GM10248 (cell line): ENCODE measurements at regions of chr17 and their contacts with region 1.

Region 1: GRCh38 chr17:39244600-39245570 is 19.1 kb upstream of the STAC2 start:
- DNase-seq: peak; percentile 84
- CTCF ChIP-seq: peak; percentile 95

Region 2: GRCh38 chr17:39069114-39069756 is 175.7 kb before region 1 on chr17:
- CTCF ChIA-PET with region 1: no interaction called
- POLR2A ChIA-PET with region 1: no interaction called
- DNase-seq: peak; percentile 78
- CTCF ChIP-seq: peak; percentile 72

Region 3: DNA sequence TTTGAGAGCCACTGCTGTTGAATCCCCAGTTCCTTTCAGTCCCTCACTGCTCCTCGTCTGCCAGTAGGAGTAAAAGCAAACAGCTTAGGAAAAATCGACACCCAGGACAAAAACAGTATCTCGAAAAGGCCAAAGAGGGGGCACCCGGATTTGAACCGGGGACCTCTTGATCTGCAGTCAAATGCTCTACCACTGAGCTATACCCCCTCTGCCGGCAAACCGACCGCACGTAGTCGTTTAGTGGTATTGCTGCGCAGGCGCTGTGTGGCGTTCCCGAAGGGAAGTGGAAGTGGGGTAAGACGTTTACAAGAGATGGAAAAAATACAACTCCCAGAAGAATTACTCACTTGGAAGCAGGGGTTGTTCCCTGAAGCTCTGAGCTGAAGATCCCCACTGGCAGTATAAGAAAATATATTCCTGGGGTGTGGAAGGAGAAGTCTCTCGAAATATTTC is 91.3 kb before region 1 on chr17:
- CTCF ChIA-PET with region 1: interaction called, 17 read pairs
- POLR2A ChIA-PET with region 1: no interaction called
- DNase-seq: peak; percentile 75
- CTCF ChIP-seq: no peak

Region 4: DNA sequence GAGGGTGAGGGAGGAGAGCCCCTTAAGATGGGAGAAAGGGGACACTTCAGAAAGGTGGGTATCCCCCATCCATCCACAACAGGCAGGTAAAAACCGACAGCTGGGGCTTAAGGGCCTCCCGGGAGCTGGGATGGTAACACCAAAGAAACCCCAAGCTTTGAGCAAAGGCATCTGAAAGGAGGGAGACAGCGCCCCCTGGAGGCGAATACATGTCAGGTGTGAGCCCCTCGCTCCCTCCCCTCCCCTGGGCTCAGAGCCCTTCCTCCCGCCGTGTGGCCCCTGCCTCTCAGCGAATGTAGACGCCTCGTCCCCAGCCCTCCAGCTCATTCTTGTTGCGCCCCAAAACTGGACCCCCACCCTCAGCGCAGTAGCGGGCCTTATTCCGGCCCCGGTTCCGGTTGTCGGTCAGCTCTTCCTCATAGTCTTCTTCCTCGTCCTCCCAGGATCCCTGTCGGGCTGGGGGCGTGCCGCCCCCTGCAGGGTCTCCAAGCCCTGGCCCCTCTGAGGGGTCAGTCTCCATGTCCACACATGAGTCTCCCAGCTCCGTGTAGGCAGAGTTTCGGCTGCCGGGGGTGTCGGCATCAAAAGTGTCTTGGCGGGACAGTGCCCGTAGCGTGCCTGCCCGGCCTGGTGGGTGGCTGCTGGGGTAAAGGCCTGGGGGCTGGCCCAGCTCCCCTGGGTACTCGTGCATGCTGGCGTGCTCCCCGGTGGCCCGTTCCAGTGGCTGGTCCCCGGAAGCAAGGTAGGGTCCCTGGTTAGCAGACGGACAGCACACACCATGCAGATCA is 69.8 kb before region 1 on chr17:
- CTCF ChIA-PET with region 1: interaction called, 17 read pairs
- POLR2A ChIA-PET with region 1: no interaction called
- DNase-seq: peak; percentile 89
- CTCF ChIP-seq: peak; percentile 66

Region 5: DNA sequence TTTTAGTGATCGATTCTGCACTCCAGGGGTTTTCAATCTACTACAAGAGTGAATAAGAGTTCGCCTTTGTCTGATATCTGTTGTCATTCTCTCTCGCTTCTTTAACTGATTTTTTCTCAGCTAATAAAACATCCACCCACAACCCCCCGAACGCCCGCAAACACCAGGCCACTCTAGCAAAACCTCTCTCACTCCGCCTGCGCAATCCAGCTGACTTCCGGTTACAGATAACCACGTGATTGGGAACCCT is 45.1 kb before region 1 on chr17:
- CTCF ChIA-PET with region 1: interaction called, 151 read pairs
- POLR2A ChIA-PET with region 1: interaction called, 8 read pairs
- DNase-seq: peak; percentile 93
- CTCF ChIP-seq: no peak

Region 6: DNA sequence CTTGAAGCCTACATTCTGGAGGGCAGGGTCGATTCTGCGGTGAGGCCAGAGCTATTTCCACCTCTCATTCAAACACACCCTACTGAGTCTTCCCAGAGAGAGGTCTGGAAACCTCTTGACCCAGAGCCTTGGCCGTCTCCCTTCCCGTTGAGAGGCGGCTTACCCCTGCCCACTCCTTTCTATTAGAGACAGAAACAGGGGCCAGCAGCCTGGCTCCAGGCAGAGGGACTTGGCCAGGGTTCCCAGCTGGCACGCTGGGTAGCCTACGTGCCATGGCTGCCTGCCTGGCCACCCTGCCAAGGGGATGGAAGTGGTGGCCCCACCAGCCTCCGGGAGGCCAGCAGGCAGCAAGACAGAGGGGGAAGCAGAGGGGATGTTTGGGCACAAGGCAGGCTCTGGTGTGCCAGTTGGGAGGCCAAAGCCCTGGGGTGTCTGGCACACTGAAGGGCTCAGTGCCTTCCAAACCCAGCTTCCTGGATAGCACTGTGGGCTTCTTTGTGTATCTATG is 25.2 kb before region 1 on chr17:
- CTCF ChIA-PET with region 1: interaction called, 11 read pairs
- POLR2A ChIA-PET with region 1: no interaction called
- DNase-seq: no peak
- CTCF ChIP-seq: no peak